ENCODE measurements at regions of chr13 and their contacts with region 1.

Region 1: DNA sequence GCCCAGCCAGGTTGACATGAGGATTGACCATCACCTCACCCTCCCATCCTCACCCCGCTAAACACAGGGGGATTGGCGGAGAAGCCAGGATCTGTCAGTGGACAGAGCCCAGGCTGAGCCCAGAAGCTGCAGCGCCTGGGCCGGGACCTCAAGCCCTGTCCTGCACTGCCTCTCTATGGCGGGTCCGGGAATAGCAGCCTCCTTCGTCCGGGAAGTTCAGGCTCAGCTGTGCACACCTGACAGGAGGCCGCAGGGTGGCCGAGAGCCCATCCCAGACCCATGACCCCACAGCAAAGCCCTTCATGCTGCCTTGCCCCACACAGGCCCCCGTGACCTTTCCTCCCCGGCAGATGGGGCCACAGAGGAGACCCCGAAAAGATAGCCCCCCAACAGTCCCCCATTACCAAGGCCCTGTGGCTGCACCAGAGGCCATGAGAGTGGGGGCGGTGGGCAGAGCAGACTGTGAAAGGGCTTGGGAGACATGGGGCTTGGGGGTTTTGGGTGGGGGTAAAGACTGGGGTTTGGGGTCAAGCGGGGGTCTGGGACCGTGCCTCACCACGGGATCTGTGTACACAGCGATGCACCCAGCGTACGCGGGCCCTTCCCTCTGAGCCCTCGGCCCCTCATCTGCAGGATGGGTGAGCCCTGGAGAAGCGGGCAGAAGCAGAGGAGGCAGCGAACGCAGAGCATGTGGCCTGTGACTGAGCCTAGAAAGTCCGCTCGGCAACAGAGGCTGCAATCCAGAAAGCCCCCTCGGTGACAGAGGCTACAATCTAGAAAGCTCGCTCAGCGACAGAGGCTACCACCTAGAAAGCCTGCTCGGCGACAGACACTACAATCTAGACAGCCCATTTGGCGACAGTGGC is 68.1 kb downstream of the SPACA7 start:
- DNase-seq: peak; percentile 50
- H3K4me3 Mint-ChIP-seq: no peak overlapping the region
- H3K27ac Mint-ChIP-seq: no peak overlapping the region
- H3K4me1 Mint-ChIP-seq: no peaks in the 10 kb centered on the region
- H3K27me3 Mint-ChIP-seq: no peaks in the 10 kb centered on the region
- CTCF ChIP-seq: peak; percentile 89

Region 2: DNA sequence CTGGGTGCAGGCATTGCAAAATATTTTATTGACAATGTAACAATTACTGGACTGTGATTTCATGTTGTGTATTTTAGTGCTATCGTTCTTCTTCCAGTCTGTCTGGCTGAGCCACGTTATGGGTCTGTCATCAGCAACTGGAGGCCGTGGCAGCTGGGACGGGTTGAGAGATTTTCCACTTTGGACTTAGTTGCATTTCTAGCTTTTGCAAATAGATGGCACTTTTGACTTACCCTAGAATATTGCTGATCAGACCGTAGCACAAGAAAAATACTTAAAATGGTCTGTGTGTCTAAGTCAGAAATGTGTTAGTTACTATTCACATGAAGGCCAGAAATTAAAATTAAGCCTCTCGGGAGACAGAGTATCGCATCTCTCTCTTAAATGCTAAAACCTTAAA is 912.7 kb before region 1 on chr13:
- CTCF ChIA-PET with region 1: interaction called, 24 read pairs
- POLR2A ChIA-PET with region 1: no interaction called
- intact Hi-C with region 1: no loop called
- DNase-seq: peak; percentile 1
- H3K4me3 Mint-ChIP-seq: no peak overlapping the region
- H3K27ac Mint-ChIP-seq: no peak overlapping the region
- H3K4me1 Mint-ChIP-seq: no peaks in the 10 kb centered on the region
- H3K27me3 Mint-ChIP-seq: no peaks in the 10 kb centered on the region
- CTCF ChIP-seq: no peak

Region 3: DNA sequence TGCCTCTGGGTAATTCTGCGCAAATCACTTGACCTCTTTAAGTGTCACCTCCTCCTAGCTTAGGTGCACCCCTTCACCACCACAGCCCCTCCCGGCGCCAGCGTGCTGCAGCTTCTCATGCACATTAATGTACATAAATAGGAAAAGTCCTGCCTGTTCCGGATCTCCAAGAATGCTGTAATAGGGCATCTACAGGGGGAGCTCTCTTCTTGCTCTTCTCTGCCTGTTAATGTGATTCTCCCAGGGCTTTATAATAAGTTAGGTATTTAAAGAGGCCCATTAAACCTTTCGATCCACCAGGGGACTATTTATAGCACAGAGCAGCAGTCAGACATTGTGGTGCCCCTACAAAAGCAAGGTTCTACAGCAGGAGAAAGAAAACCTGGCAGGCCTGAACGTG is 342.0 kb before region 1 on chr13:
- CTCF ChIA-PET with region 1: interaction called, 3 read pairs
- POLR2A ChIA-PET with region 1: no interaction called
- intact Hi-C with region 1: loop called (anchors 1 kb)
- DNase-seq: peak; percentile 5
- H3K4me3 Mint-ChIP-seq: no peak overlapping the region
- H3K27ac Mint-ChIP-seq: no peak overlapping the region
- H3K4me1 Mint-ChIP-seq: no peaks in the 10 kb centered on the region
- H3K27me3 Mint-ChIP-seq: no peaks in the 10 kb centered on the region
- CTCF ChIP-seq: no peak

Region 4: DNA sequence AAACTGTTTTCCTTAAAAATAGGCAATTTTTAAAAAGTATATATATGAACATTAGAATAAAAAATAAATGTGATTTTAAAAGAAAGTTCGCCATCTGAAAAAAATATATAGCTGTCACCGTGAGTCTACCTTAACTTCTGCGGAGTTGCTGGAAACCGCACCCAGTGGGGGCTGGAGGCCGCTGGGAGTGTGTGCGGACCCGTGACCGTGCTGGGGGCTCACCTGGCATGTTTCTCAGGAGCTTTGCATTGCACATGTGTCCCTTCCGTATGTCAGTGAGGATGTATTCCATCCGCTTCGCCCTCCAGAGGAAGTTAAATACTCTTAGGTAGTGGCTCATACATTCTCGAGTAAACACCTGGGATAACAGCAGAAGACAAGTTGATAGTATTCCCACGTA is 72.0 kb after region 1 on chr13:
- CTCF ChIA-PET with region 1: no interaction called
- POLR2A ChIA-PET with region 1: no interaction called
- intact Hi-C with region 1: no loop called
- DNase-seq: no peak
- H3K4me3 Mint-ChIP-seq: no peak overlapping the region
- H3K27ac Mint-ChIP-seq: no peak overlapping the region
- H3K4me1 Mint-ChIP-seq: no peaks in the 10 kb centered on the region
- H3K27me3 Mint-ChIP-seq: no peaks in the 10 kb centered on the region
- CTCF ChIP-seq: no peak

Region 5: DNA sequence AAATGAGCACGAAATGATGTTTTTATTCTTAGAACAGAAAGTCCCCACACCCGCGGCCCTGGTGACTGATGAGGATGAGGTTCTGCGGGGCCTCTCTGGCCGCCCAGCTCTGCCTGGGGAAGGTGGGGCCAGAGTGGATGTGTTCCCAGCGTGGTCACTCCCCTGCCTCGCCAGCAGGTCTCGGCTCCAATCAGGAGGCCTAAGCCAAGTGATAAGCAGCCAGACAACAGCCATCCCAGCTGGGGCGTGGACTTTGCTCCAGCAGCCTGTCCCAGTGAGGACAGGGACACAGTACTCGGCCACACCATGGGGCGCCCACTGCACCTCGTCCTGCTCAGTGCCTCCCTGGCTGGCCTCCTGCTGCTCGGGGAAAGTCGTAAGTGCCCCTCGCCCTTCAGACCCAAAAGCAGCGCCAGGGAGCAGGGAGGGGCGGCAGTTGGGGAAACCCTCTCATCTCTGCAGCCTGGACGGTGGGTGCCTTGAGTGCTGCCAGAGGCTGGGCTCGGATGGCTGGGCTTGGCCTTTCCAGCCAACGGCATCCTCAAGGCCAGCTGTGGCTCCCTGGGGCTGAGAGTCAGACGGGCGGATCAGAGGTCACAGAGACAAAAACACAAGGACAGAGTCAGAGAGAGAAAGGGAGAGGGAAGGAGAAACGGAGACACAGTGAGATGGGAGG is 678.5 kb after region 1 on chr13 and contains the start of gene F10:
- CTCF ChIA-PET with region 1: no interaction called
- POLR2A ChIA-PET with region 1: no interaction called
- intact Hi-C with region 1: no loop called
- DNase-seq: no peak
- H3K4me3 Mint-ChIP-seq: no peak within 1 kb of the TSS
- H3K27ac Mint-ChIP-seq: no peak within 1 kb of the TSS
- H3K4me1 Mint-ChIP-seq: no peaks in the 10 kb centered on the region
- H3K27me3 Mint-ChIP-seq: peaks cover 18% of the 10 kb centered on the region
- CTCF ChIP-seq: no peak
- total RNA-seq, gene F10: not detected in 2 replicates

Measured in MCF 10A (cell line).